HAP-1 (cell line): ENCODE measurements at regions of chr5 and their contacts with region 1.

Region 1: GRCh38 chr5:138632900-138633489 is 57.8 kb upstream of the HSPA9 start:
- DNase-seq: peak; percentile 87 to 91
- H3K4me3 ChIP-seq: no peak overlapping the region
- H3K4me1 ChIP-seq: no peaks in the 10 kb centered on the region
- H3K27me3 ChIP-seq: no peaks in the 10 kb centered on the region

Region 2: DNA sequence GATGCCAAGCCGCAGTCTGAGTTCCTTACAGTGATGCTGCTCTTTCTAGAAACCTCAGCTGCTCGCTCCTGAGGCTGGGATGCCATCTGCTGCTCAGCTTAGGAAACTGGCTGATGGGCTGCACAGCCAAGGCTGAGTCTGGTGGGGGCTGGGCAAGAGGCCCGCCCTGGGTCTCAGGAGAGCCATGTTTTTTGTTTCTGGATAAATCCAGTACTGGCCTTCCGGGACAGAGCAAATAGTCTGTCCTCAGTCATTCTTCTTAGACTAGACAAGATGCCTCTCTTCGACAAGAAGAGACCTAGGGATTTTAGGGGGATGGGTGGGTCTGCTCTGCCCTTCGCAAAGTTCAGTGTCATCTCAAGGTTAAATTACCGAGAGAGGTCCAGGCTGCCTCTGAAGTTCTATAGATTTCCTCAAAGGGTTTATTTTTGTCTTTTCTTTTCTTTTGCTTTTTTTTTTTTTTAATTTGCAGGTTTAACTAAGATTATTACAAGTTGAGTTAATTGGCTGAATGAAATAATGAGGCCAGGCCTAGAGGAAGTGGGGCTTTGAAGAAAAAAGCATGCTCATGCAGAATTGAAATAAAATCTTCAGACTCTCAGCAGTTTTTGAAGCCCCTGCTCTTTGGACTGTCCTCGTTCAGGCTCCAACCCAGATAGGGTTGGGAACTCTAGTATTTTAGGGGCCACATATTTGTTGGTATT is 629.9 kb after region 1 on chr5:
- in situ Hi-C with region 1: loop called (anchors 10 kb)
- DNase-seq: peak; percentile 88 to 91
- H3K4me3 ChIP-seq: no peak overlapping the region
- H3K4me1 ChIP-seq: peaks cover 5% of the 10 kb centered on the region
- H3K27me3 ChIP-seq: no peaks in the 10 kb centered on the region